ENCODE measurements at regions of chr5 and their contacts with region 1.

Region 1: DNA sequence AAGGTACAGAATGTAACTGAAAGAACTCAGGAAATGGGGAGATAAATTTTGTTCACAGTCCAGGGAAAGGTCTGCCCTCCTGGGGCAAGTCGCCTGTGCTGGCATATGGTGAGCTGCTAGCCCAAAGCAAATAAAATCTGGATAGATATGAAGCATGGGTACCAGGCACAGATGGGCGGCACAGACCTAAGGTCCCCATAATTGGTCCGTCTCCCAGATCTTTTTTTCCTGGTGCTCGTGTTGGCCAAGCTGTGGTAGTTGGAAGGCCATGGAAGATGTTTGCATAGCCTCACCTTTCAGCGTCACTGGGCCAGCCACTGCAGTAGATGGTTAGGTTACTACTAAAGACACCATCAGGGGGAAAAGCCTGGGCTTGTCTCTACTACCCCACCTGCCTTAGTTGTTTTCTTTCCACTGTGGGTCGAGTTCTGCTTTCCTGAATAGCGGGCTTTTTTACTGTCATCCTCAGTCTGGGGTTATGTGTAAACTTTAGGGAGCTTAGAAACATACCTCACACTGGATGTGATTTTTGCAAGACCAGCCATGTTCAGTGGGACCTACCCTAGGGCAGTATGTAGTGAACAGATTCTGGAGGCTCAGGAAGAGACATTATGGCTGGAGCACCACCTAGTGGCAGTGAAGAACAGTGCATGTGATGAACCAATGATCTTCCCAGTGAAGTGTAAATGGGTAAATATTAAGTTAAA is 24.2 kb upstream of the GLRX start:
- DNase-seq: peak; percentile 64 to 71
- ATAC-seq: peak; percentile 52 to 74 (median 66)
- H3K4me3 ChIP-seq: no peak overlapping the region
- H3K27ac ChIP-seq: peak overlapping the region; percentile 4
- H3K4me1 ChIP-seq: peaks cover 15% of the 10 kb centered on the region
- H3K27me3 ChIP-seq: no peaks in the 10 kb centered on the region
- CTCF ChIP-seq: peak; percentile 98

Region 2: DNA sequence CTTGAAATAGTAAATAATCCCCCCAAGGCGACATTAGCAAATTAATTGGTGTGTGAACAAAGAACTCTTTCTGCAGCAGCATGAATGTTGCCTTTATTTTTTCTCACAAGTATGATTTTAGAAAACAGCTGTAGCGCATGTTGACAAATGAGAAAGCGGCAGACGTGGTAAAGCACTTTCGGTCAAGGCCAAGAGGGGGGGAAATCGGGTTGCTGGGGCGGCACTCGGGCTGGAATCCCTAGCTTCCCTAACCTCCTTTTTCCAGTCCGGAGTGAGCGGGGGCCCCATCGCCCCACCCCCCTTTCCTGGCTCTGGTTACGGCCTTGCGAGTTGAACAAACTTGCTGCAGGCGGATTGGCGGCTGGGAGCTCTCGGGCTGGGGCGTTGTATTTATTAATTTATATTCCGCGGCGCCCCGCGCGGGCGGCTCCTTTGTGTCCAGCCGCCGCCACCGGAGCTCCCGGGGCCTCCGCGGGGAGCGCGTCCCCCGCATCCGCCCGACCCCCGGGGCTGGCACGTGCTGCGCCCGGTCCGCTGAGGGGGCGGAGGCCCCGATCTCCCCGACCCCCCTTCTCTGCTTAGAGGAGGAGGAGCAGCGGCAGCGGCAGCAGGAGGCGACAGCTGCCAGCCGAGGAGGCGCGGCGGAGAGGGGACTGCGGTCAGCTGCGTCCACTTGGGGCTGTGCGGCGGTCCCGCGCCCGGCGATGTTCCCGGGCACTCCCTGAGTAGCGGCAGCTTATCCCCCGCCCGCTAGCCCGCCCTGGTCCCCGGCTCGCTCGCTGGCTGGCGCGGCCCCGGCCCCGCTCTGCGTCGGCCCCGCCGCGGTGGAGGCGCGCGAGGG is 115.8 kb before region 1 on chr5 and contains the start of gene RHOBTB3:
- intact Hi-C with region 1: loop called in 1 of 2 experiments (anchors 5 kb)
- DNase-seq: peak; percentile 91 to 95
- ATAC-seq: peak; percentile 81 to 84 (median 82)
- H3K4me3 ChIP-seq: peak within 1 kb of the TSS; percentile 90
- H3K27ac ChIP-seq: peak within 1 kb of the TSS; percentile 94
- H3K4me1 ChIP-seq: peaks cover 57% of the 10 kb centered on the region
- H3K27me3 ChIP-seq: no peaks in the 10 kb centered on the region
- CTCF ChIP-seq: no peak
- total RNA-seq, gene RHOBTB3: 44.0 to 86.0 (median 62.8) TPM

Region 3: GRCh38 chr5:95743232-95743631 is 103.5 kb before region 1 on chr5:
- intact Hi-C with region 1: no loop called
- DNase-seq: no peak
- ATAC-seq: no peak
- H3K4me3 ChIP-seq: no peak overlapping the region
- H3K27ac ChIP-seq: no peak overlapping the region
- H3K4me1 ChIP-seq: peaks cover 9% of the 10 kb centered on the region
- H3K27me3 ChIP-seq: no peaks in the 10 kb centered on the region
- CTCF ChIP-seq: no peak

Region 4: DNA sequence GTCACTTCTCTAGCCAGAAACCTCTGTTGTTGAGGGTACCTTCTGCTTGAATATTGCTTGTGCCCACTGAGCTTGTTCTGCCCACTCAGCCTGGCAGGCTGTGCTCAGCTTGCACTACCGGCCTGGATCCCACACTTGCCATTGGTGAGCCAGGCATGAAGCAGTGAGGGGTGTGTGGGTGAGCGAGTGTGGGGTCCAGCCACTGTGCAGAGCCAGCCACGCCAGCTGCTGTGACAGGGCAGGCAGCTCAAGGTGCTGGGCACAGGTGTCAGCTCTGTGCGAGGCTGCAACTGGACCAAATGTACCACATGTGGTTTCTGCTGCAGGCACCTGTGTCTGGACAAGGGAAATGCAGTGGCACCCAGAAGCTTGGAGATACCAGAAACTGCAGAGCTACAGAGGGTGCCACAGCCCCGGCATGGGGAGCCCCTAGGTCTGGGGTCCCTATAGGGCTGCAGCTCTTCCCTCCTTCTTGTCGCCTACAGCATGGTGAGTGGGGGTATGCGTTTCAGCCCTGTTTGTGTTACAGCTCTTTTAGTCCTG is 1641.5 kb after region 1 on chr5:
- intact Hi-C with region 1: no loop called
- DNase-seq: no peak
- ATAC-seq: no peak
- H3K4me3 ChIP-seq: no peak overlapping the region
- H3K27ac ChIP-seq: no peak overlapping the region
- H3K4me1 ChIP-seq: no peaks in the 10 kb centered on the region
- H3K27me3 ChIP-seq: no peaks in the 10 kb centered on the region
- CTCF ChIP-seq: no peak

Measured in psoas muscle (tissue), 8 donors.